Posterior vena cava (tissue), 2 donors: ENCODE measurements at regions of chr3 and their contacts with region 1.

Region 1: DNA sequence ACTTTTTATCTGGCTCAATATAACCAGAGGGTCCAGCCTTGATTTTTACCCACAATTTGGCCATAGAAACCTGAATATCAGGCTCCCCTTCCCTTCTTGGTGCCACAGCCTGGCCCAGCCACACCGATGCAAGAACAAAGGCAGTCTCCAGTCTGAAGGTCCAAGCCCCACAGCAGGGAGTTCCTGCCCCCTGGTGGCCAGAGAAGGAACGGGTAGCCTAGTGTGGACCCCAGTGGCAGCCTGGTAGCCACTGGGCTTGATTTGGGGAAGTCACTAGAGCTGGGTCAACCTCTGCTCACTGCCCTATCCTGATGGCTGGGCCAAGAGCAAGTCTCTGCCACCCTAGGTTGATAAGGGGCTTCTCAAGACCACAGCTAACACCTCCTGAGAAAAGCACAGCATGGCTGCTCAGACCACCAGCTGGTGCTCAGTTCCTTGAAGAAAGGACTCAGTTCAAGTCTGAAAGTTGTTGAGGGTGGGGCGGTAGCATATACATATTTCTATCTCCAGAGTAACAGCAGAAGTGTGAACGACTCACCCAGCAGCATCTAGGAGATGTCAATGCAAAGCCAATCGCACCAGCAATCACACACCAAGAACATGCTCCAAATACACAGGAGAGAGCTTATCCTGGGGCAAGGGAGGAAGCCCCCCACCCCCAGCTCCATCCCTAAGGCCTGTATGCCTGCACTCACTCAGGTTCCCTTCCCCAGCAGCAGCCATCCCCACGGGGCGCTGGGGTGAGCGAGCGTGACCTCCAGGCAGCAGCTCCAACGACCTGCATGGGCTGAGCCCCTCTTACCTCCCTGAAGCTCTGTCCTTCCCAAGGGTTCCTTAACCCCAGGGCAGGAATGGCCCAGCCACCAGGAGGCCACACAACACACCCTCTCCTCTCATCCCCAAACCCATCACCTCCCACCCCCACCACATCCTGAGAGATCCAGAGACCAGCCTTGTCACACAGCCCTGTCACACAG is 7.6 kb downstream of the PFKFB4 start:
- DNase-seq: peak; percentile 96

Region 2: GRCh38 chr3:48273594-48274211 is 275.3 kb before region 1 on chr3:
- intact Hi-C with region 1: loop called in 1 of 2 experiments (anchors 10 kb)
- DNase-seq: no peak

Region 3: GRCh38 chr3:48402281-48402732 is 146.7 kb before region 1 on chr3:
- intact Hi-C with region 1: loop called in 1 of 2 experiments (anchors 10 kb)
- DNase-seq: peak; percentile 98

Region 4: DNA sequence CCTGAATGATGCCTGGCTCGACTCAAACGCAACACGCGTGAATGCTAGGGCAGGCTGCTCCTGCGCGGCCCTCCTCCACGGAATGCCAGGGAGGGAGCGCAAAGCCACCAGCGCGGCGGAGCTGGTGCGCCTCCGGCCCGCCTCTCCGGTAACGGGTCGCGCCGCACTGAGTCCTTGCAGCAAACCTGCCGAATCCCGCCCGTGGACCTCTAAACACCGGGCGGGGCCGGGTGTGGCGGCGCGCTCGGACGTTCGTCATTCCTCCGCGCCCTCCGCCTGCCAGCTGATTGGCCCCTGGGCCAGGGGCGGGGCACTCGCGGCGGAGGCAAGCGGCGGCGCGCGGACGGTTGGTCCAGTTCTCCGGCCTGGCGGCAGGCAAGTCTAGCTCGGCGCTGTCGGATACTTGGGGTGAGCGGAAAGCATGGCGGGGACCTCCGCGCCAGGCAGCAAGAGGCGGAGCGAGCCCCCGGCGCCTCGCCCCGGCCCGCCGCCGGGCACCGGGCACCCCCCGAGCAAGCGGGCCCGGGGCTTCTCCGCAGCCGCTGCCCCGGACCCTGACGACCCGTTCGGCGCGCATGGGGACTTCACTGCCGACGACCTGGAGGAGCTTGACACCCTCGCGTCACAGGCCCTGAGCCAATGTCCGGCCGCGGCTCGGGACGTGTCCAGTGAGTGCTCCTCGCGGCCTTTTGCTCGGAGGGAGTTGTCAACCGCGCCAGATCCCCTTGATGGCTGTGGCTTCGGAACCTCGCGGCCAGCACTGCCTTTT is 102.4 kb before region 1 on chr3 and contains the start of gene ATRIP:
- intact Hi-C with region 1: loop called in 1 of 2 experiments (anchors 5 kb)
- DNase-seq: peak; percentile 97
- total RNA-seq, gene ATRIP: 6.2 to 6.3 TPM

Region 5: DNA sequence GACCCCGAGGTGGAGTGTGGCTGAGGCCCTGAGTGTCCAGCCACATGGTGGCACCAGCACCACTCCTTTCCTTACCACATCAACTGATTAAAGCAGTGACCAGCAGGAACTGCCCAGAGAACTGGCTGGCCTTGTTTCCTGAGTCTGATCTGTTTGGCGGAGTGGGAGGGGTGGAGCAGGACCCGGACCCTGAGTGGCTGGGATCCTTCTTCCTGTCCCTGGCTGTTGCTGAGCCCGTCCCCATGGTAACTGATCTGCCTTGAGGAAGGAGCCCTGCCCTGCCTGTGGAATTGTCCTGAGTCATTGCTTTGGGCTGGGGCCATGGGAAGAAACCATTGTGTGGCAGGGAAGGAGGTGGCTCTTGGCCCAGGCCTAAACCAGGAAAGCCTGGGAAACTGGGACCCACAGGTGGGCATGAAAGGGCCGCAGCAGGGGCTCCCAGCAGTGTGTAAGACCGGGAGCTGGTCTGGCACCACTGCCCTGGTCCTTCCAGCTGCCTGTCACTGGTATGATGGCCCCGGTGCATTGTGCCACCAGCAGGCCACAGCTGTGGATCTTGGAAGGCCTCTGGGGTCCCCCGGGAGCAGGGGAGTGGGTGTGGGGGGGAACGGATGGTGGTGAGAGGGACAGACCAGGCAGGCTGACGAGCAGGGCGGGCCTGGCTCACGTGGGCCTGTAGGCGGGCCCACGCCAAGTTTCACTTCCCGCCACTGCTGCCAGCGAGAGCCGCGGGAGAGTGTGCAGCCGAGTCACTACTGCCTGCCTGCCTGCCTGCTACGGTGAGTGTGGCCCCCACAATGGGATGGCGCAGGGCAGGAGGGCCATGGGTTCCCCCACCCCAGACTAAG is 83.3 kb before region 1 on chr3:
- intact Hi-C with region 1: loop called (anchors 2 kb)
- DNase-seq: peak; percentile 98

Region 6: GRCh38 chr3:48514436-48515227 is 34.4 kb before region 1 on chr3:
- intact Hi-C with region 1: no loop called
- DNase-seq: peak; percentile 18

Region 7: DNA sequence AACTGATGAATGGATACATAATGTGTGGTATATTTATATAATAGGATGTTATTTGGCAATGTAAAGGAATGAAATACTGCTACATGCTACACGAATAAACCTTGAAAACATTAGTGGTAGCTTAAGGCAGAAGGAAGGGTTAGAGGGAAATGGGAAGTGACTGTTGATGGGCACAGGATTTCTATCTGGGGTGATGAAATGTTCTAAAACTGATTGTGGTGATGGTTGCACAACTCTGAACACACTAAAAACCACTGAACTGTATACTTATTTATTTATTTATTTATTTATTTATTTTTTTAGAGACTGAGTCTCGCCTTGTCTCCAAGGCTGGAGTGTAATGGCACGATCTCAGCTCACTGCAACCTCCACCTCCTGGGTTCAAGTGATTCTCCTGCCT is 20.3 kb before region 1 on chr3:
- intact Hi-C with region 1: no loop called
- DNase-seq: no peak